ENCODE measurements at regions of chr18 and their contacts with region 1.

Region 1: DNA sequence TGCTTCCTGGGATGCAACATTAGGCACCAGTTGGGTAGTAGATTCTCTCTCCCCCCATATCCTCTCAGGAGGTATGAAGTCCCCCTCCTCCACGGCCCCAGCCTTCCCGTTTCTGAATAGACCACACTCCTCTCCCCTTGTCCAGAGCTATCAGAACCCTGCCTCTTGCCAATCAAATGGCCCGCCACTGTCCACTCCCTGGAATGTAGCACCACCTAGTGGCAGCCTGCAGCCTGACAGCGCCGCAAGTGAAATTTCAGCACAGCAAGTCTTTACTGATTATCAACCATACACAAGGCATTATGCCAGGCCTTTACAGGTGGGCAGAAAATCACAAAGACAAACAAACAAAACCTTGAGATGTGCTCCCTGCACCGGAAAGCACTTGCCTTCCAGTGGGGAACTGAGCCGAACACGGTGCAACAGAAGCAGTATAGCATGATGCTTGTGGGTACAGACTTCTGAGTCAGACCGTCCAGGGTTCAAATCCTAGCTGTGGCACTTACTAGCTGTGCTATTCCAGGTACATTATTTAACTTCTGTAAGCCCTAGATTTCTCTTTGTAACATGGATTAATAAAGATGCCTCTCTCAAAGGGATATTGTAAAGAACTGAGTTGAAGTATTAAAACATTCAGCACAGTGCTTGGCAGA is 174.0 kb downstream of the SMAD2 start:
- DNase-seq: peak; percentile 75
- H3K4me3 ChIP-seq: no peak overlapping the region; a peak in 1 of 4 replicates
- H3K27ac ChIP-seq: no peak overlapping the region
- H3K4me1 ChIP-seq: no peaks in the 10 kb centered on the region
- H3K27me3 ChIP-seq: no peaks in the 10 kb centered on the region
- CTCF ChIP-seq: peak; percentile 90
- EP300 ChIP-seq: no peak
- RAD21 ChIP-seq: peak; percentile 86

Region 2: GRCh38 chr18:47226660-47227059 is 529.8 kb before region 1 on chr18:
- CTCF ChIA-PET with region 1: interaction called, 17 read pairs
- POLR2A ChIA-PET with region 1: no interaction called
- DNase-seq: no peak
- H3K4me3 ChIP-seq: no peak overlapping the region
- H3K27ac ChIP-seq: no peak overlapping the region
- H3K4me1 ChIP-seq: no peaks in the 10 kb centered on the region
- H3K27me3 ChIP-seq: no peaks in the 10 kb centered on the region; the same call in 1 of the 2 replicates
- CTCF ChIP-seq: no peak
- EP300 ChIP-seq: no peak
- RAD21 ChIP-seq: no peak

Region 3: DNA sequence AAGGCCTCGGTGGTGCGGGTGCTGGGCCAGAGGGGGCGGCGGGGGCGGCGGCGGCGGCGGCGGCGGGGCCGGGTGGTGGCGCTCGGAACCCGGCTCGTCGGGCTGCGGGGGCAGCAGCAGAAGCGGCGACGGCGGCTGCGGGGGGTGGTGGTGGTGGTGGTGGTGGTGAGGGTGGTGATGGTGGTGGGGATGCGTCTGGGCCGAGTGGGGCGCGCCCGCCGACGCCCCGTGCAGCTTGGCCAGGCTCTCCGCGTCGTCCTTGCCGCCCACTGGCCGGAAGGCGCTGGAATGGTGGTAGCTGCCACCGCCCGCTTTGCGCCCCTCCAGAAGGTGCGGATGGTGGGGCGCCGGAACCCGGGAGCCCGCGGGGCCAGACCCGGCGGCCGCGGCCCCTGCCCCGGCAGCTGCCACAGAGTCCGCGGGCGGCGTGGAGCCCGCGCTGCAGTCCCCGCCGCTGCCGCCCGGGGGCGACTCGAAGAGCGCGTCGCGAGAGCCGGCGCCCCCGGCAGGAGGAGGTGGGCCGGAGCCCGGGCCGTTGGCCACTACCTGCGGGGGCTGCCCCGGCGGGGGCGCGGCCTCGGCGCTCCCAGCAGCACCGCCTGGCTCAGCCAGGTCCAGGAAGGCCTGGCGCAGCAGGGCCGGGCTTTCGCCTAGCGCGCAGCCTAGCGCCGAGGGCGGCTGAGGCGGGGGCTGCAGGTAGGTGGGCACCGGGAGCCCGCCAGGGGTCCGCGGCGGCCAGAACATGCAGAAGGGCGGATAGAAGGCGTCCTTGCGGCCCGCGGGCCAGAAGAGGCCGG is 509.3 kb before region 1 on chr18:
- CTCF ChIA-PET with region 1: interaction called, 20 read pairs
- POLR2A ChIA-PET with region 1: no interaction called
- DNase-seq: peak; percentile 90
- H3K4me3 ChIP-seq: peak overlapping the region in 1 of 2 experiments; percentile 9; a peak in 1 of 4 replicates
- H3K27ac ChIP-seq: no peak overlapping the region
- H3K4me1 ChIP-seq: peaks cover 0 to 7% of the 10 kb centered on the region in 2 experiments; a peak in 1 of 4 replicates
- H3K27me3 ChIP-seq: peaks cover 51% of the 10 kb centered on the region
- CTCF ChIP-seq: peak; percentile 41
- EP300 ChIP-seq: no peak
- RAD21 ChIP-seq: peak; percentile 32

Region 4: DNA sequence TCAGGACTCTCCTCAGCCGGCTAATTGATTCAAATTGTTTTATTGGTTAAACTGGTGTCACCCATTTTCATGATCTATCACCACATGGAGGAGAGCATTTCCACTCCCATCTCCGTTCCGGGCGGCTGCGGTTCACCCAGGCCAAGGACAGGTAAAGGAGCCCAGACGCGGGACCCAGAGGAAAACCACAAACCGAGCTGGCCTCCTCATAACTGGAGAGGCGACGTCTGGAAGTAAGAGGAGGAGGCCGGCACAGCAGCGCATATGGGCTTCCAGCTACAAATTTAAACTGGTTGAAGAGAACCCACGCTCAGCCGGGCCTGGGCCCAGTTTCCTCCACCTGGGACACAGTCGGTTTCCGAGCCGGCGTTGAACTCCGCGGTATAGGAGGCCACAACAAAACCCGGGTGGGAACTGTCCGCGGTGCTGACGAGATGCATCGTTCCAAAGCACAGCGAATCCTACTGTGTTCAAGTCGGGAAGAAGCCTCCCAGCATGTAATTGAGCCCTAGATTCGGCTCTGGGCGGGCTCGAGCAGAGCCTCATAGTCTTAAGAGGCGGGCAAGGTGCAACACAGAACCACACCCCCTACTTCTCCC is 502.1 kb before region 1 on chr18:
- CTCF ChIA-PET with region 1: interaction called, 20 read pairs
- POLR2A ChIA-PET with region 1: no interaction called
- DNase-seq: no peak
- H3K4me3 ChIP-seq: no peak overlapping the region
- H3K27ac ChIP-seq: no peak overlapping the region
- H3K4me1 ChIP-seq: peaks cover 0 to 7% of the 10 kb centered on the region in 2 experiments; a peak in 1 of 4 replicates
- H3K27me3 ChIP-seq: peaks cover 45% of the 10 kb centered on the region
- CTCF ChIP-seq: no peak
- EP300 ChIP-seq: no peak
- RAD21 ChIP-seq: no peak

Region 5: GRCh38 chr18:47260120-47260923 is 496.2 kb before region 1 on chr18:
- CTCF ChIA-PET with region 1: interaction called, 16 read pairs
- POLR2A ChIA-PET with region 1: no interaction called
- DNase-seq: peak; percentile 78
- H3K4me3 ChIP-seq: no peak overlapping the region
- H3K27ac ChIP-seq: no peak overlapping the region
- H3K4me1 ChIP-seq: peaks cover 0 to 8% of the 10 kb centered on the region in 2 experiments; a peak in 1 of 4 replicates
- H3K27me3 ChIP-seq: peaks cover 30% of the 10 kb centered on the region; the same call in 1 of the 2 replicates
- CTCF ChIP-seq: no peak
- EP300 ChIP-seq: no peak
- RAD21 ChIP-seq: peak; percentile 12; the same call in 1 of the 2 replicates

Region 6: GRCh38 chr18:47772374-47773248 is 16.1 kb after region 1 on chr18:
- CTCF ChIA-PET with region 1: interaction called, 45 read pairs
- POLR2A ChIA-PET with region 1: no interaction called
- DNase-seq: no peak
- H3K4me3 ChIP-seq: no peak overlapping the region; a peak in 1 of 4 replicates
- H3K27ac ChIP-seq: no peak overlapping the region
- H3K4me1 ChIP-seq: no peaks in the 10 kb centered on the region
- H3K27me3 ChIP-seq: no peaks in the 10 kb centered on the region; the same call in 1 of the 2 replicates
- CTCF ChIP-seq: peak; percentile 54
- EP300 ChIP-seq: no peak
- RAD21 ChIP-seq: peak; percentile 55